HEK293 (cell line): ENCODE measurements at regions of chr12 and their contacts with region 1.

Region 1: GRCh38 chr12:131132118-131132892 is 178.6 kb downstream of the ADGRD1 start:
- H3K4me3 ChIP-seq: no peak overlapping the region
- H3K27ac ChIP-seq: no peak overlapping the region
- H3K4me1 ChIP-seq: no peaks in the 10 kb centered on the region
- CTCF ChIP-seq: peak; percentile 85

Region 2: DNA sequence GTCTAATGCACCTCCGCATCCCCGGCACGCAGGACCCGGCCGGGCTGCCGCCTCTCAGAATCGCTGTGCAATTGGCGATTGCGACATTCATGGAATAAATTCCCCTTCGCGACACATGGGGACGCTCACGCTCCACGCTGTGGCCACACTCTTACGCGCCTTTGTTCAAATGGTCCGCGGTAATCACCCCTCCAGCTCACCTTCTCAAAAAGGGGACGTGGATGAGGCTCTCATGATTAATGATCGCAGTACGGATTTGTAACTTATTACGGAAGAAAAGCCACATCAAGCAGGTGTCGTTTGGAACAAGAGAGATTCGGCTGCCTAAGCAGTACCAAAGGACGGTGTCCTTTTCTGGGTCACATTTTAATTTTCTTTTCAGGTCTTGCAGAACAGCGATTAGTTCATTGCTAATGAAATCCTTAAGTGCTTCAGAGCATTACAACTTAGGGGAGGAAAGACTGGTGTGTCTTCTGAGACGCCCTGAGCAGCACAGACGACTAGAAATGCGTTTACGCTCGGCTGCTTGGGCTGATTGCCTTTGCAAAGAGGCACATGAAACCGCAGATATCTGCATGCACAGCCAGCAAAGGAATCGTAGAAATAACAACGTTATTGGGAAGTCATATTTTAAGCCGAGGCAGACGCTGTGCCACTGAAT is 215.9 kb before region 1 on chr12:
- CTCF ChIA-PET with region 1: interaction called, 29 read pairs
- POLR2A ChIA-PET with region 1: no interaction called
- H3K4me3 ChIP-seq: peak overlapping the region; percentile 16; the same call in 1 of the 2 replicates
- H3K27ac ChIP-seq: no peak overlapping the region
- H3K4me1 ChIP-seq: no peaks in the 10 kb centered on the region
- CTCF ChIP-seq: peak; percentile 94

Region 3: DNA sequence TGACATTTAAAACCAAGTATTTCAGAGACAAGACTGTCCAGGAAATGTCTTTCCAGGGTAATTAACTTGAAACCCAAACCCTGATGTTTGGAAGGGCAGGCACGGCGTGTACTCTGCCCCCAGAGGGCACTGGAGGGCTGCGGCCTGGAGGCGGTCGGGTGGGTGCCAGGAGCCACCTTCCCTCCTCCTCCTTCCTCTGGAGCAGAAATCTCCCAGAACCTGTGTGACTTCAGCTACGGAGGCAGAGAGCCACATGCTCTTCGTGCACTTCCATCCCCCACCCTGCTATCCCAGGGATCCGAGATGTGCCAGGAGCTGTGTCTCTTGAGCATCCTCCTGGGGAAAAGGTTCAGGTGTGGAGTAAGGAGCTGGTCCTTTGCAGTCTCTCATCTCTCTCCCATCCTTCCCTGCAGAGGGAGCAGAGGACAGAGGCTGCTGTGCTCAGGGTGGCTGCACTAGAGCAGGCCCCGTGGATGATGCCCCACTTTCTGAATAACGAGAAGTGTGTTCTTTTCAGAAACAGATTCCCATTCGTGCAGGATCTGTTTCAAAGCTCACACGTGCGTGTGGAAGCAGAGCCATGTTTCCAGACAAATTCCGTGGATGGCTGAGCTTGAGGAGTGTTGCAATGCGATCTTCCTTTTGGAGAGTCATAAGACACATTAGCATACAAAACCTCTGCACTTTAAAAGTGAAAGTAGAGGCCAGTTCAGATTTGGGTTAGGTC is 15.8 kb before region 1 on chr12:
- CTCF ChIA-PET with region 1: interaction called, 19 read pairs
- POLR2A ChIA-PET with region 1: no interaction called
- H3K4me3 ChIP-seq: no peak overlapping the region
- H3K27ac ChIP-seq: no peak overlapping the region
- H3K4me1 ChIP-seq: no peaks in the 10 kb centered on the region
- CTCF ChIP-seq: 0 out of 2 replicates have a peak, but pooled peaks have one; percentile 34

Region 4: GRCh38 chr12:131142891-131143657 is 10.8 kb after region 1 on chr12:
- CTCF ChIA-PET with region 1: interaction called, 21 read pairs
- POLR2A ChIA-PET with region 1: no interaction called
- H3K4me3 ChIP-seq: no peak overlapping the region
- H3K27ac ChIP-seq: no peak overlapping the region
- H3K4me1 ChIP-seq: no peaks in the 10 kb centered on the region
- CTCF ChIP-seq: no peak

Region 5: DNA sequence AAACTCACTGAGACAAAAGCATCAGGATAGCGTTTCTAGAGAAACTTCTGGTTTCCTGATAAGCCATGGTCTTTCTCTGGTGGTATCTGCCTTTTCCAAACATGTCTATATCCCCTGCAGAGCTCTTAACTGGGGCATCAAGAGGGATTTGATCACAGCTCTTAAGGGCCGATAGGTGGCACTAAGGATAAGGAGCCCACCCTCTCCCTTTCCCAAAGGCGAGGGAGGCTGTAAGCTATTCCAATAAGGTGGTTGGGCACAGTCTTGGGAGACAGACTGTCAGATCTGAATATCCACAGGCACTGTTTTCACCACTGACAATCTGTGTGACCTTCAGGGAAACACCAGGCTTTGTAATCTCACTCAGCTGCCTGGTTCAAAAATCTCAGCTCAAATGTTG is 27.4 kb after region 1 on chr12:
- CTCF ChIA-PET with region 1: interaction called, 11 read pairs
- POLR2A ChIA-PET with region 1: no interaction called
- H3K4me3 ChIP-seq: no peak overlapping the region
- H3K27ac ChIP-seq: no peak overlapping the region
- H3K4me1 ChIP-seq: no peaks in the 10 kb centered on the region
- CTCF ChIP-seq: no peak

Region 6: GRCh38 chr12:131290255-131290959 is 158.1 kb after region 1 on chr12:
- CTCF ChIA-PET with region 1: no interaction called
- POLR2A ChIA-PET with region 1: no interaction called
- H3K4me3 ChIP-seq: no peak overlapping the region
- H3K27ac ChIP-seq: no peak overlapping the region
- H3K4me1 ChIP-seq: no peaks in the 10 kb centered on the region
- CTCF ChIP-seq: no peak